ENCODE measurements at regions of chr1 and their contacts with region 1.

Region 1: DNA sequence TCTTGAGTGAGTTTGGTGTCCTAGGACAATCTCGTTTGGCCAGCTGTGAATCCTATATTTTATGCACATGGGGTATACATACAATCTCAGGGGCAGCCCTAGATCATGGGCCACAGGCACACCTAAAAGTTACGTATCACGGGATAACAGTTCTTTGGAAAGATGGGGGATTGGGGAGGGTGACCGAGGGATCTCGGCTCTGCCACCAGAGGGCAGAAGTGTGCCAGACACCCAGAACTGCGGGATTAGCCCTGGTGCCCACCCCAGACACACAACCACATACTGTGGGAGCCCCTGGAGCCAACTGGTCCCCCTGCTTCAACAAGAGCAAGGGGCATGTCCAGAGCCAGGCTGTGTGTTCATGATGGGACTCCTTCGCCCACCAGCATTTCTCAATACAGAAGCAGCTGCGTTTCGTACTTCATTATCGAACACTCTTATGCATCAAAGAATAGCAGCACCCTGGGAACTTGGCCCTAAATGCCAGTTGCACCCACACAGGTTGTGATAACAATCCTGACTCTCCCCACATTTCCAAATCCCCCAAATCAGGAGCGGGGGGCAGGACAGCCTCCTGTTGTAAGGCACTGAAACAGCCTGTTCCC is 37.4 kb downstream of the TMCO4 start:
- DNase-seq: peak; percentile 23
- ATAC-seq: peak; percentile 24
- H3K4me3 ChIP-seq: no peak overlapping the region
- H3K27ac ChIP-seq: no peak overlapping the region
- H3K4me1 ChIP-seq: peaks cover 16% of the 10 kb centered on the region
- H3K27me3 ChIP-seq: no peaks in the 10 kb centered on the region
- CTCF ChIP-seq: peak; percentile 71
- POLR2A ChIP-seq: no peak
- RAD21 ChIP-seq: peak; percentile 61

Region 2: GRCh38 chr1:19547814-19548213 is 214.5 kb before region 1 on chr1:
- CTCF ChIA-PET with region 1: no interaction called
- POLR2A ChIA-PET with region 1: no interaction called
- dilution Hi-C with region 1: no loop called
- in situ Hi-C with region 1: no loop called
- intact Hi-C with region 1: no loop called
- DNase-seq: no peak
- ATAC-seq: no peak
- H3K4me3 ChIP-seq: no peak overlapping the region
- H3K27ac ChIP-seq: no peak overlapping the region
- H3K4me1 ChIP-seq: no peaks in the 10 kb centered on the region
- H3K27me3 ChIP-seq: no peaks in the 10 kb centered on the region
- CTCF ChIP-seq: no peak
- POLR2A ChIP-seq: no peak
- RAD21 ChIP-seq: no peak

Region 3: GRCh38 chr1:19735440-19736127 is 26.7 kb before region 1 on chr1:
- CTCF ChIA-PET with region 1: no interaction called
- POLR2A ChIA-PET with region 1: no interaction called
- dilution Hi-C with region 1: no loop called
- in situ Hi-C with region 1: no loop called
- intact Hi-C with region 1: no loop called
- DNase-seq: peak; percentile 98
- ATAC-seq: peak; percentile 90
- H3K4me3 ChIP-seq: no peak overlapping the region
- H3K27ac ChIP-seq: no peak overlapping the region
- H3K4me1 ChIP-seq: peaks cover 11% of the 10 kb centered on the region; the same call in 1 of the 2 replicates
- H3K27me3 ChIP-seq: no peaks in the 10 kb centered on the region
- CTCF ChIP-seq: no peak
- POLR2A ChIP-seq: no peak
- RAD21 ChIP-seq: no peak

Region 4: GRCh38 chr1:19811206-19811851 is 49.1 kb after region 1 on chr1:
- CTCF ChIA-PET with region 1: interaction called, 5 read pairs
- POLR2A ChIA-PET with region 1: no interaction called
- dilution Hi-C with region 1: no loop called
- in situ Hi-C with region 1: no loop called
- intact Hi-C with region 1: loop called (anchors 1 kb)
- DNase-seq: peak; percentile 49
- ATAC-seq: peak; percentile 90
- H3K4me3 ChIP-seq: no peak overlapping the region
- H3K27ac ChIP-seq: no peak overlapping the region
- H3K4me1 ChIP-seq: no peaks in the 10 kb centered on the region
- H3K27me3 ChIP-seq: peaks cover 14% of the 10 kb centered on the region; the same call in 1 of the 2 replicates
- CTCF ChIP-seq: peak; percentile 70
- POLR2A ChIP-seq: no peak
- RAD21 ChIP-seq: peak; percentile 70

Region 5: GRCh38 chr1:19882111-19883071 is 120.1 kb after region 1 on chr1 and contains the start of gene OTUD3:
- CTCF ChIA-PET with region 1: no interaction called
- POLR2A ChIA-PET with region 1: no interaction called
- dilution Hi-C with region 1: no loop called
- in situ Hi-C with region 1: no loop called
- intact Hi-C with region 1: loop called (anchors 1 kb)
- DNase-seq: peak; percentile 97
- ATAC-seq: peak; percentile 95
- H3K4me3 ChIP-seq: peak within 1 kb of the TSS; percentile 92
- H3K27ac ChIP-seq: peak within 1 kb of the TSS; percentile 86
- H3K4me1 ChIP-seq: peaks cover 6% of the 10 kb centered on the region
- H3K27me3 ChIP-seq: no peaks in the 10 kb centered on the region; the same call in 1 of the 2 replicates
- CTCF ChIP-seq: peak; percentile 93
- POLR2A ChIP-seq: peak; percentile 83
- RAD21 ChIP-seq: peak; percentile 49
- total RNA-seq, gene OTUD3: 2.9 and 6.1 TPM in 2 replicates